ENCODE measurements at regions of chr4 and their contacts with region 1.

Region 1: GRCh38 chr4:31020363-31020762 is 300.2 kb downstream of the PCDH7 start:
- DNase-seq: no peak
- ATAC-seq: peak in 2 of 8 donors; percentile 12 to 28
- H3K4me3 ChIP-seq: no peak overlapping the region
- H3K27ac ChIP-seq: peak overlapping the region in 1 of 10 donors; percentile 13
- H3K4me1 ChIP-seq: peaks cover 0 to 15% (median 0%) of the 10 kb centered on the region in 9 donors
- H3K27me3 ChIP-seq: no peaks in the 10 kb centered on the region
- CTCF ChIP-seq: no peak

Region 2: DNA sequence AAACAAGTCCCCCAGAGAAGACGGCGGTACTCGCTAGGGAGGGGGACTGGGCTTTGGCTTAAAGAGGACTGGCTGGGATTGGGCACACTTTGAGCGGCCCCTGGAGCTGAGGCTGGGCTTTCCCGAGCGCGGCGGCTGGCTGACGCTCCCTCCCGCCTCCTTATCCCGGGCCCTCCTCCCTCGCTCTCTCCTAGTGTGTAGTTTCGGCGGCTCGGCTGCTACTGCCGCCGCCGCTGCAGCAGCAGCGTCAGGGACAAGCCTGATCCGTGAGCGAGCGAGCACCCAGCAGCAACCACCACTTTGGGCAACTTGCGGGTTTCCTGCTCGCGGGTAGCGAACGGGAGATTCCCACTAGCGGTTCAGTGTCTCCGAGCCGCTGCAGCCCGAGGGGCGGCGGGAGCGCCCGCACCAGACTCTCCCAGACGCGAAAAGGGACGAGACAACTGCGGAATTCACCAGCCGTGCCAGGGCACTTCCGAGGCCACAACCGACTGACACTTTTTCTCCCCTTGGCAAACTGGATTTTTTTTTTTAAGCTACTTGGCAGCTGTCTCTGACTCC is 300.8 kb before region 1 on chr4:
- intact Hi-C with region 1: loop called in 2 of 10 experiments (anchors 5 to 10 kb)
- DNase-seq: peak; percentile 50 to 52
- ATAC-seq: peak; percentile 60 to 77 (median 63)
- H3K4me3 ChIP-seq: peak overlapping the region; percentile 30 to 79 (median 58)
- H3K27ac ChIP-seq: peak overlapping the region in 9 of 10 donors; percentile 32 to 87 (median 72)
- H3K4me1 ChIP-seq: peaks cover 0 to 45% (median 26%) of the 10 kb centered on the region in 9 donors
- H3K27me3 ChIP-seq: peaks cover 0 to 79% (median 62%) of the 10 kb centered on the region in 7 donors
- CTCF ChIP-seq: no peak